ENCODE measurements at regions of chrX and their contacts with region 1.

Region 1: GRCh38 chrX:127038065-127038464 is 218.5 kb downstream of the PRR32 start:
- DNase-seq: no peak
- ATAC-seq: no peak

Region 2: DNA sequence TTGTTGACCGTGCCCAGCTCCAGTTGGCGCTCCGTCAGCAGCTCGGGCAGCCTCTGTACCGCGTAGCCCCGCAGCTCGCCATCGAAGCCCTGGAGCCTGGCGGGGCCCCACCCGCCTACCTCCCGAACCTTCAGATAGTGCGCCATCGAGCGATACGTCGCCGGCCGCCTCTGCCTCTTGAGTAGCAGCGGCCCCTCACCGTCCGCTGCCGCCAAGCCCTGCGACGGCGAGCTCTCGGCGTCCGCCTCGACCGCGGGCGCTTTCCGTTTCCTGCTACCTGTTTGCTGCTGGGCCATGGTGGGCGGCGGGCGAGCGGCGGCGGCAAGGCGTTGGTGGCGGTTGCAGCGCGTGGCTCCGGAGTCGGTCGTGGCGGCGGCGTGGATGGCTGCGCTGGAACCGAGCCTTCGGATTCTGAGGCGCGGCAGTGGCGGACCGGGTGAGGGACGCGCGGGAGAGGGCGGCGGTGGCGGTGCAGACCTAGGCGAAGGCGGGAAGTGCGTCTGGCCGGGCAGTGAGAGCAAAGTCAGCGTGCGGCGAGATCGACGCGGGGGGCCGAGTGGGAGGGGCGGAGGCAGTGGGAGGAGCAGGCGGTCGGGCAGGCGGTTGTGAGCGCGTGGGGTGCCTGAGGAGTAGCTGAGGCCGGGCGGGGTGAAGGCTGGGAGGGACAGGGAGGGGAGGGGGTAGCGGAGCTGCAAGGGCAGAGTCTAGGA is 485.6 kb before region 1 on chrX and contains the start of gene DCAF12L1:
- intact Hi-C with region 1: no loop called
- DNase-seq: no peak
- ATAC-seq: no peak
- total RNA-seq, gene DCAF12L1: not detected

Region 3: GRCh38 chrX:126770194-126770593 is 267.9 kb before region 1 on chrX:
- intact Hi-C with region 1: loop called (anchors 2 kb)
- DNase-seq: no peak
- ATAC-seq: no peak

Region 4: DNA sequence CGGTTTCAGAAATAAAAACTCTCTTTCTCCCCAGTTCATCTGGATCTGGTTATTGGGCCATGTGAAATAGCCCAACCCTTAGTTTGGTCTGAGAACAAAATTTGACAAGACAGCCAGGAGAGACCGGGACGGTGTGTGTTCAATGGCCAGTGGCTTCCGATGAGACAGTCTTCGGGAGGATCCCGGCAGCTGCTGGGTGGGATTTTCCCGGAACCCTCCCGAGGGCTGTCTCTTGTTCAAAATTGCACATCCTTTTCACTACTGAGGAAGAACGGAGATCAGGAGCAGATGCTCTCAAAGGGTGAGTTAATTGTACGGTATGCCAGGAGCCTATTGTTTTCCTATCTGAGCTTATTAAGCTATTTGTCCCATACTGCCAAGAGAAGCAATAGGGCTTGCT is 52.1 kb before region 1 on chrX:
- intact Hi-C with region 1: loop called (anchors 10 kb)
- DNase-seq: no peak
- ATAC-seq: no peak

Measured in Right ventricle myocardium inferior (tissue), 1 donor.